ENCODE measurements at regions of chr11 and their contacts with region 1.

Region 1: DNA sequence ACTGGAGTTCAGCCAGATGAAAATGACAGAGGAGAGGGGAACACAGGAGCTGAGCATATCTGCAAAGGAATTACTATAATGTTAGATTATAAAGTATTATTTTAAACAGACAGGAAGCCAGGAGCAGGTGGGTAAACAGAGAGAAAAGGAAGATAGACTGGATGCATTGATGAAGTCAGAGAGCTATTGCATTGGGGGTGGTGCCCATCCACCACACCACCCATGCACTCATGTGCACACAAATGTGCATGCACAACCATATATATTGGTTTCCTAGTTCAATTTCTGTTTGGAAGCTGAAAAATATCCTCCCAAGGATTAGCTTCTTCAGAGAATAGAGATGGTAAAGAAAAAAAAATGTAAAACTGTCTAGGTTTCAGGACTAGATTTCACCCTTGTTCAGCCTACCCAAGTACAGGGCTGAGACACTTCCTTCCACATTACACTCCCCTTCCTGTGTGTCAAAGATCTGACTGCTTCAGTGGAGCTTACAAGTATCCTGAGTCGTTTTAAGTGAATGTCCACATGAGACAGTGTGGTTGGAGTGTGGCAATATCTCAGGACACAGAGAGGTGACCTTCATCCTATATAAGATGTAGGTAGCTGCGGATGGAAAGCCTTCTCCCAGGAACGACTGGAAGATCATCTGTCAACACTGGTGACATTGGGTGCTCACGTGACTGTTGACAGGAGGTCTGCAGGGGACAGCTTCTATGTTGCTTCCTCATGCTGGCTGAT is 12.2 kb upstream of the SMPD1 start:
- DNase-seq: peak; percentile 61
- ATAC-seq: peak; percentile 57
- H3K4me3 ChIP-seq: peak overlapping the region in 3 of 5 experiments; percentile 0 to 27 (median 21)
- H3K4me3 Mint-ChIP-seq: peak overlapping the region; percentile 68
- H3K27ac ChIP-seq: peak overlapping the region; percentile 66 to 73
- H3K27ac Mint-ChIP-seq: peak overlapping the region; percentile 88
- H3K4me1 ChIP-seq: peaks cover 16 to 17% of the 10 kb centered on the region in 2 donors
- H3K4me1 Mint-ChIP-seq: peaks cover 20% of the 10 kb centered on the region
- H3K27me3 ChIP-seq: no peaks in the 10 kb centered on the region
- H3K27me3 Mint-ChIP-seq: no peaks in the 10 kb centered on the region
- CTCF ChIP-seq: no peak

Region 2: DNA sequence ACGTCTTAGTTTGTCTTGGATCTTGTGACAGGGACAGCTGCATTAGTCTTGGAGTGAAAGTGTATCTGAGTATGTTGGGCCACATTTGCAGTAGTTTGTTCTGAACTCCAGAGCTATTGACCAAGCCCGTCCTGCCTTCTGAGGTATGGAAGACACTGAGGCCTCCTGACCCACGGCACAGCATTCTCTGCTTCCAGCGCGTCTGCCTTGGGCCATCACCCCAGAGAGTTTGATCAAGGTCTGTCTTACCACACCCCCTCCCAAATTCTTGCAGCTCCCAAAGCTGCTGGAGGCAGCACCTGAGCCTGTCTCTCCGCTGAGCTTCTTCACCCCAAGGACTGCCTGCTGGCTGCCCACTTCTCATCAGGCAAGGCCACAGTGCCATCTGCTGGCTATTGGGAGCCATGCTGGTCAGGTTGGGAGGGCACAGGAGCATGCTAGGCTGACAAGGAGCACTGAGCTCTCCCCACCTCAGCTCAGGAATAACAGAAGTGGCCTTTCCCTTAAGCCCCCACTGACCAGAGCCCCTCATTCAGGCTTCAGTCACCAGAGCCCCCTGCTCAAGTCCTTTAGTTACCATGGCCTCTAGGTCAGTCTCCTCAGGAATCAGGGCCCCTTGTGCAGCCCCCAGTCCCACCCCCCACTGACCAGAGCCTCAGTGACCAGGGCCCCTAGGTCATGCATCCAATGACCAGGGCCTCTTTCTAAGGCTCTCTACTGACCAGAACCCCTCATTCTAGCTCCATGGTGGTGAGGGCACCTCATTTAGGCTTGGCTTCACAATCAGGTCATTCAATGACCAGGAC is 15.0 kb before region 1 on chr11:
- CTCF ChIA-PET with region 1: interaction called, 47 read pairs
- POLR2A ChIA-PET with region 1: no interaction called
- intact Hi-C with region 1: no loop called
- DNase-seq: peak; percentile 60
- ATAC-seq: peak; percentile 49
- H3K4me3 ChIP-seq: no peak overlapping the region
- H3K4me3 Mint-ChIP-seq: no peak overlapping the region
- H3K27ac ChIP-seq: no peak overlapping the region
- H3K27ac Mint-ChIP-seq: no peak overlapping the region
- H3K4me1 ChIP-seq: no peaks in the 10 kb centered on the region
- H3K4me1 Mint-ChIP-seq: no peaks in the 10 kb centered on the region
- H3K27me3 ChIP-seq: no peaks in the 10 kb centered on the region
- H3K27me3 Mint-ChIP-seq: no peaks in the 10 kb centered on the region
- CTCF ChIP-seq: peak; percentile 74

Region 3: GRCh38 chr11:6419009-6419631 is 41.0 kb after region 1 on chr11 and contains the start of gene APBB1:
- CTCF ChIA-PET with region 1: interaction called, 29 read pairs
- POLR2A ChIA-PET with region 1: interaction called, 3 read pairs
- intact Hi-C with region 1: no loop called
- DNase-seq: peak; percentile 87
- ATAC-seq: peak; percentile 83
- H3K4me3 ChIP-seq: peak within 1 kb of the TSS; percentile 27 to 85 (median 71)
- H3K4me3 Mint-ChIP-seq: peak within 1 kb of the TSS; percentile 85
- H3K27ac ChIP-seq: peak within 1 kb of the TSS; percentile 5 to 66
- H3K27ac Mint-ChIP-seq: peak within 1 kb of the TSS; percentile 76
- H3K4me1 ChIP-seq: peaks cover 29 to 32% of the 10 kb centered on the region in 2 donors
- H3K4me1 Mint-ChIP-seq: peaks cover 7% of the 10 kb centered on the region
- H3K27me3 ChIP-seq: peaks cover 0 to 8% (median 7%) of the 10 kb centered on the region in 4 experiments
- H3K27me3 Mint-ChIP-seq: peaks cover 28% of the 10 kb centered on the region
- CTCF ChIP-seq: peak; percentile 17
- total RNA-seq, gene APBB1: 31.4 and 32.5 TPM in 2 replicates

Region 4: DNA sequence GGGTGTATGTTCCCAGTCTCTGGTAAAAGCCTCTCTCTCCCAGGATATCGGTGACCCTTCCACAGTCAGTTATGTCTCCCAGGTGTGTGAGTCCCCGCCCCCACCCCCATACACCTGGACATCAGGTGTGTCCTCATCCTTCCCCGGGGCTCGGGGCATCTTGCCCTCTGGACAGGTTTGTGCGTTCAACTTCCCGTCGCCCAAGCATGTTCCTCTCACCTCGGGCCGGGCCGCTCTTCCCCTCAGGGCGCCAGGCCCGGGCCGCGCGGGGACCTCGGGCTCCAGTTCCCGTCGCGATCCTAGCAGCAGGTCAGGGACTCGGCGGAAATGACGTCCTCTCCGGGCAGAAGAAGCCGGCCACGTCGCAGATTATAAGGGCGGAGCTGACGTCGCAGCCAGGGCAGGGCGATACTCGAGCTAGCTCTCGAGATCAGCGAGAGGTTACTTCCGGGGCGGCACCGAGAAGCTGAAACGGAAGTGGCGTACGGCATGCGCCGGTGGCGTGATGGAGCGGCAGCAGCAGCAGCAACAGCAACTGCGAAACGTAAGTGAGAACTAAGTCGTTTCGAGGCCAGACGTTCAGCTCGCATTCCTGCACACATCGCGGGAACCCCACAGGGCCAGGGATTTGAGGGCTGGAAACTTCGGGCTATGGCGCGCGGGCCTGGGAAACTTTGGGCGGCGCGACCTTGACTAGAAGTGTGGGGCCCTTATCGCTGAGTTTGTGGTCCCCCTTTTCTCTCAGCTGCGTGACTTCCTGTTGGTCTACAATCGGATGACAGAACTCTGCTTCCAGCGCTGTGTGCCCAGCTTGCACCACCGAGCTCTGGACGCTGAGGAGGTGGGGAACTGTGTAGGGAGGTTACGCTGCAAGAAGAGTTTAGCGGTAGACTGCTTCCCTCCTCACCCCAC is 103.2 kb after region 1 on chr11 and contains the starts of genes ARFIP2 and TIMM10B:
- CTCF ChIA-PET with region 1: interaction called, 27 read pairs
- POLR2A ChIA-PET with region 1: no interaction called
- intact Hi-C with region 1: loop called (anchors 1 kb)
- DNase-seq: peak; percentile 98
- ATAC-seq: peak; percentile 96
- H3K4me3 ChIP-seq: peak within 1 kb of the TSS; percentile 26 to 92 (median 83)
- H3K4me3 Mint-ChIP-seq: peak within 1 kb of the TSS; percentile 97
- H3K27ac ChIP-seq: peak within 1 kb of the TSS; percentile 90 to 96
- H3K27ac Mint-ChIP-seq: peak within 1 kb of the TSS; percentile 97
- H3K4me1 ChIP-seq: peaks cover 20 to 27% of the 10 kb centered on the region in 2 donors
- H3K4me1 Mint-ChIP-seq: peaks cover 39% of the 10 kb centered on the region
- H3K27me3 ChIP-seq: no peaks in the 10 kb centered on the region
- H3K27me3 Mint-ChIP-seq: no peaks in the 10 kb centered on the region
- CTCF ChIP-seq: no peak
- total RNA-seq, gene ARFIP2: 46.8 and 47.5 TPM in 2 replicates
- total RNA-seq, gene TIMM10B: 62.1 and 63.7 TPM in 2 replicates

Region 5: DNA sequence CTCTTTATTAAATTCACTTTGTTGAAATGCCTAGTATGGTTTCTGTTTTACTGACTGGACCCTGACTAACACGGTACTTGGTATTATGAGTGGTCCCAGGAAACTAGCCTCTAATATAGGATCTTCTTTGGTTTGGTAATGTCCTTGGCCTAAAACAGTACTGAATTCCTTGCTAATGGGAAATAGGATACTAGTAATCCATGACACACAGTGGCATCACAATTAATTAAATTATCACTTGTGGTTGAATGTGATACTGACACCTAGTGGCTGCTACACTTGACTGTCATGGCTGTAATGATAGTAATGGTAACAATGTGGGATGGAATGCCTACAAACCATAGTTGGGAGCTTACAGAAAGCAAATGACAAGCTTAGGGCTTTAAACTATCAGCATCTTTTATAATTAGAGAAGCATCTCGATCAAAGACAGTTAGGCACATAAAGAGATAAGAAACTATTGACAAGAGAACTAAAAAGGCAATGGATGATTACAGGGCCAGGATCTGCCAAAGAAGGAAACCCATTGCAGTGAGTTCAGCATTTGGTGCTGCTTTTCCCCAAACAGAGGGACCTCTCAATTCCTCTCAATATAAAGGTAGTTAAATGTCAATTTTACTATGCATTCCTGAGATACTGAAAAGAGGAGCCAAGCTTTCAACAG is 127.6 kb after region 1 on chr11:
- CTCF ChIA-PET with region 1: interaction called, 184 read pairs
- POLR2A ChIA-PET with region 1: no interaction called
- intact Hi-C with region 1: loop called (anchors 1 kb)
- DNase-seq: peak; percentile 53
- ATAC-seq: peak; percentile 33
- H3K4me3 ChIP-seq: no peak overlapping the region
- H3K4me3 Mint-ChIP-seq: no peak overlapping the region
- H3K27ac ChIP-seq: no peak overlapping the region
- H3K27ac Mint-ChIP-seq: no peak overlapping the region
- H3K4me1 ChIP-seq: no peaks in the 10 kb centered on the region
- H3K4me1 Mint-ChIP-seq: no peaks in the 10 kb centered on the region
- H3K27me3 ChIP-seq: no peaks in the 10 kb centered on the region
- H3K27me3 Mint-ChIP-seq: no peaks in the 10 kb centered on the region
- CTCF ChIP-seq: peak; percentile 76

Region 6: DNA sequence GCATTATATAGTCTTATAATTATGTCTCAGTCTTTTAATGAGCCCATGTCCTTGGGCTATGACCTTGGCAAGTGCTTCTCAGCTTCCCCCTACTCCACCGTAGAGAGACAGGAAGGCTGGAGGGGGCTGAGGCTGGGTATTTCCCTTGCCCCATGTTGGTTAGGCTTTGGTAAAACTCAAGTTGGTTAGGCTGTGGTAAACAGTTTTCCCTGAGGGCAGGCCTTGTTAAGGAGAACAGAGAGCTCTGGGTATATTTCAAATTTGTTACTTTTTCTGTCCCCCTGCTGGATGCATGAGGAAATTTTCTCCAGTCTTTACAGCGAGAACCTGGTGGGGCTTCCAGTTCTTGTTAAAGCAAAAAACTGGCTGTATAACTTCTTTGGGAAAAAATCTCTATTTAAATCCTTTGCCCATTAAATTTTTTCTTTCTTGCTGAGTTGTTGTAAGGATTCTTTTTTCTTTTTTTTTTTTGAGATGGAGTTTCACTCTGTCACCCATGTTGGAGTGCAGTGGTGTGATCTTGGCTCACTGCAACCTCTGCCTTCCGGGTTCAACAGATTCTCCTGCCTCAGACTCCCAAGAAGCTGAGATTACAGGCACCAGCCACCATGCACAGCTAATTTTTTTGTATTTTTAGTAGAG is 289.8 kb after region 1 on chr11:
- CTCF ChIA-PET with region 1: interaction called, 12 read pairs
- POLR2A ChIA-PET with region 1: no interaction called
- intact Hi-C with region 1: loop called (anchors 1 kb)
- DNase-seq: peak; percentile 70
- ATAC-seq: peak; percentile 79
- H3K4me3 ChIP-seq: no peak overlapping the region
- H3K4me3 Mint-ChIP-seq: no peak overlapping the region
- H3K27ac ChIP-seq: no peak overlapping the region
- H3K27ac Mint-ChIP-seq: peak overlapping the region; percentile 34
- H3K4me1 ChIP-seq: peaks cover 0 to 5% of the 10 kb centered on the region in 2 donors
- H3K4me1 Mint-ChIP-seq: peaks cover 5% of the 10 kb centered on the region
- H3K27me3 ChIP-seq: no peaks in the 10 kb centered on the region
- H3K27me3 Mint-ChIP-seq: peaks cover 6% of the 10 kb centered on the region
- CTCF ChIP-seq: peak; percentile 75

Region 7: DNA sequence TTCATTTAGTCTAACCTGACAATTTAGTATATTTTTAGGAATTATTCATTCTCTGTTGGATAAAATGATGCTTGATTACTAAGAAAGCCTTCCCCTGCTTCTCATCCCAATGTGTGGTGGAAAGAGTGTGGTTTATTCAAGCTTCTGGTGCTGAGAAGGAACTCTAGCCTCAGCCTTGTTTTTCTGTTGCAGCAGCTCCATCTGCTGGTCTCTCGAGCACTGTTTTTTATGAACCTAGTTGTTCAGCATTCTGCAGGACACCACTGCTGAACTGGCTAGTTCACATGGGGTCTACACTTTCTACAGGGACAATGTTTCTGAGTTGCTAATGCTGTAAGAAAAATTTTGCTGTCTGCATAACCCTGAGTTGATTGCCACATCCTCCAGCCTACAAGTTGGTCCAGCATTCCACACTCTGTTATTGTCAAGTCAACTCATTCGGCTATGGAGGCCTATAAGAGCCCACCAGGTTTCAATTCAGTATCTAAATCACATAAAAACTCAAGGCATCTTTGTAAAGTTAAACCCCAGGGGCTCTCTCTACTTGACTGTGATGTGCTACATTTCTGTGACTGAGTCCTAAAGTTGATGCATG is 379.4 kb after region 1 on chr11:
- CTCF ChIA-PET with region 1: interaction called, 26 read pairs
- POLR2A ChIA-PET with region 1: no interaction called
- intact Hi-C with region 1: loop called (anchors 5 kb)
- DNase-seq: peak; percentile 75
- ATAC-seq: peak; percentile 67
- H3K4me3 ChIP-seq: no peak overlapping the region
- H3K4me3 Mint-ChIP-seq: no peak overlapping the region
- H3K27ac ChIP-seq: no peak overlapping the region
- H3K27ac Mint-ChIP-seq: no peak overlapping the region
- H3K4me1 ChIP-seq: no peaks in the 10 kb centered on the region
- H3K4me1 Mint-ChIP-seq: peaks cover 2% of the 10 kb centered on the region
- H3K27me3 ChIP-seq: peaks cover 0 to 5% (median 0%) of the 10 kb centered on the region in 4 experiments
- H3K27me3 Mint-ChIP-seq: peaks cover 9% of the 10 kb centered on the region
- CTCF ChIP-seq: peak; percentile 77